AG04450 (cell line): ENCODE measurements at regions of chr1 and their contacts with region 1.

Region 1: DNA sequence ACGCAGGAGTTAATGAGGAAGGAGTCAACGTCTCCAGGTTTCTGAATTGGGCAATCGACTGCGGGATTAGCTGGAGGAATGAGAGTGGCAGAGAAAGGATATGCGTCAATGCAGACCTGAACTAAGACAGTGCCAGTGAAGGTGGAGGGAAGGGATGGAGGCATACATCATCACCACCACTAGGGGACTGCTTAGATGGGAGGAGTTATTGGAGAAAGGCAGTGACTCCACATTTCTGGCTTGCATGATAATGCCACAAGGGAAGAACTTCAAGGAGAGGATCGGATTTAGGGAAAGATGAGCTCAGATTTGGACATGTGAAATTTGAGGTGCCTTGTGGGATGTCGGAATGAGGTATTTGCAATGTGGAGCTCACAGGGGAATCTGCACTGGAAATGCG is 17.5 kb downstream of the VASH2 start:
- DNase-seq: no peak
- H3K4me3 ChIP-seq: no peak overlapping the region
- H3K27ac ChIP-seq: no peak overlapping the region
- H3K27me3 ChIP-seq: no peaks in the 10 kb centered on the region
- CTCF ChIP-seq: peak; percentile 78

Region 2: GRCh38 chr1:212950243-212951125 is 17.3 kb before region 1 on chr1 and contains the start of gene VASH2:
- CTCF ChIA-PET with region 1: interaction called, 12 read pairs
- POLR2A ChIA-PET with region 1: no interaction called
- DNase-seq: no peak
- H3K4me3 ChIP-seq: peak within 1 kb of the TSS; percentile 74
- H3K27ac ChIP-seq: no peak within 1 kb of the TSS
- H3K27me3 ChIP-seq: peaks cover 15% of the 10 kb centered on the region
- CTCF ChIP-seq: no peak; the same call in 1 of the 2 replicates
- polyA plus RNA-seq, gene VASH2: 4.2 and 5.9 TPM in 2 replicates

Region 3: DNA sequence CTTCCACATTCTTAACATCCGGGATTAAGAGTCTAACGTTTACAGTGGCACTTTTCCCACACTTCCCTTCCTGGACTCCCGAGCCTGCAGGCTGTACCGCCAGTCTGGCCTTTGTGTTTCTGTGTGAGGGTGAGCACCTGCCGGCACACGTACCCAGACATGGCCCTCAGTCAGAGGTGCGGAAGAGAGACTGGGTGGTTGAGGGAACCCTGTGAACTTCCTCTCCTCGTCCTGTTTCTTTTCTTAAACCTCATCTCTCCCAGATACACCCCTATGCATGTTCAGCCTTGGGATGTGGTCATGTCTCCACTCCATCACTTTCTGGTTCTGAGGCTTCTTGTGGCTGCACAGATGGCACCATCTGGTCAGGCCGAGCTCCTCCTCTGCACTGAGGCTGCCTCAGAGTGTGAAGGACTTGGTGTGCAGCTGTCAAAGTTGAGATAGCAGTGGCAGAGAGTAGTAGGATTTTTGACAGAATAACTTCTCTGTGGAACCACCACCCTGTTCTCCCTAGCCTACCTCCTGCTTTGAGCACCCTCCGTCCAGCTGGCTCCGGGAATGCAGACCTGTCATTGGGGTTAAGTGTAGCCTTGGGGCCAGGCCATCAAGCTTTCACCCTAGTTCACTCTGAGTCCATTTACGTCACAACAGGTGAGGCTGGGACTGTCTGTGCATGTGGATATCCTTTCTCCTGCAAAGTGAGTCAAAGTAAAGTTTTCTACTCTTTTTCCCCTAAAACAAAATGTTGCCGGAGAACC is 13.9 kb after region 1 on chr1:
- CTCF ChIA-PET with region 1: interaction called, 21 read pairs
- POLR2A ChIA-PET with region 1: interaction called, 7 read pairs
- DNase-seq: no peak
- H3K4me3 ChIP-seq: no peak overlapping the region
- H3K27ac ChIP-seq: no peak overlapping the region
- H3K27me3 ChIP-seq: no peaks in the 10 kb centered on the region
- CTCF ChIP-seq: no peak

Region 4: DNA sequence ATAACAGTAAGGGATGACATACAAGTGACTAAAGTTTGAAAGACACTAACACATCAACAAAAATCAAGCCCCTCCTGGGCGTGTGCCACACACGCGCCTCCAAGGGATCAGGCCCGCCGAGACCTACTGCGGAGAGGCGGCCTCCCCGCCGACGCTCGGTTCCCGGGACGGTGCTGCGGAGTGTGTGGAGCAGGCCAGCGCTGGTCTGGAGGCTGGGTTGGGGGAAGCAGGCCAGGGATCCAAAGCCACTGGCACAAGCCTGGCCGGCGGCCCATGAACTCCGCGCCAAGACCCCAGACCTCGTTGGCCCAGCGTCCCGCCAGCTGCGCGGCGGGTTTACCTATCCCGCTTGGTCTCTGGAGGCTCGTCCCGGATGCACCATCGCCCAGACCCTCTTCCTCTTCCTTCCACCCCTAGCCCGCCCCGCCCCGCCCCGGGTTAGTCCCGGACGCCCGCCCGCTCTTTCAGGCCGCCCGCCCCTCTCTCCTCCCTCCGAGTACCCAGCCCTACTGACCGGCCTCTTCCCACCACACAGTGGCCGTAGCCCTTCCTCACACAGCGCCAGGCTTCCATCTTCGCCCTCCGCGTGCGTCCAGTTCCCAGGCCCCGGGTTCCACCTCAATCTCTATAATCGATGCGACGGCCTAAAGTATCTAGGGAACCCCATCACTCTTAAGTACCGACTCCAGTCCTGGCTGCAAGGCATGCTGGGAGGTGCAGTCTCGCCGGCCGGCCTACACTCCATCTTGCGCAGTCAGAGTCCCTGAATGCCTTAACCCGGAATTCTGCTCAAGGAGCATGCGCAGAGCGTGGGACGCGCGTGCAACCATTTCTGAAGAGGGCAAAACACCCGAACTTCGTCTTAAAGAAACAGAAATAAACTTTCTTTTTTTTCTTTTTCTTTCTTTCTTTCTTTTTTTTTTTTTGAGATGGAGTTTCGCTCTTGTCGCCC is 47.6 kb after region 1 on chr1 and contains the start of gene ANGEL2:
- CTCF ChIA-PET with region 1: no interaction called
- POLR2A ChIA-PET with region 1: no interaction called
- DNase-seq: peak; percentile 94
- H3K4me3 ChIP-seq: peak within 1 kb of the TSS; percentile 90
- H3K27ac ChIP-seq: peak within 1 kb of the TSS; percentile 78
- H3K27me3 ChIP-seq: peaks cover under 1% of the 10 kb centered on the region
- CTCF ChIP-seq: no peak
- polyA plus RNA-seq, gene ANGEL2: 25.1 and 30.6 TPM in 2 replicates